Naive thymus-derived CD4-positive, alpha-beta T cell (primary cell): ENCODE measurements at regions of chr4 and their contacts with region 1.

Region 1: DNA sequence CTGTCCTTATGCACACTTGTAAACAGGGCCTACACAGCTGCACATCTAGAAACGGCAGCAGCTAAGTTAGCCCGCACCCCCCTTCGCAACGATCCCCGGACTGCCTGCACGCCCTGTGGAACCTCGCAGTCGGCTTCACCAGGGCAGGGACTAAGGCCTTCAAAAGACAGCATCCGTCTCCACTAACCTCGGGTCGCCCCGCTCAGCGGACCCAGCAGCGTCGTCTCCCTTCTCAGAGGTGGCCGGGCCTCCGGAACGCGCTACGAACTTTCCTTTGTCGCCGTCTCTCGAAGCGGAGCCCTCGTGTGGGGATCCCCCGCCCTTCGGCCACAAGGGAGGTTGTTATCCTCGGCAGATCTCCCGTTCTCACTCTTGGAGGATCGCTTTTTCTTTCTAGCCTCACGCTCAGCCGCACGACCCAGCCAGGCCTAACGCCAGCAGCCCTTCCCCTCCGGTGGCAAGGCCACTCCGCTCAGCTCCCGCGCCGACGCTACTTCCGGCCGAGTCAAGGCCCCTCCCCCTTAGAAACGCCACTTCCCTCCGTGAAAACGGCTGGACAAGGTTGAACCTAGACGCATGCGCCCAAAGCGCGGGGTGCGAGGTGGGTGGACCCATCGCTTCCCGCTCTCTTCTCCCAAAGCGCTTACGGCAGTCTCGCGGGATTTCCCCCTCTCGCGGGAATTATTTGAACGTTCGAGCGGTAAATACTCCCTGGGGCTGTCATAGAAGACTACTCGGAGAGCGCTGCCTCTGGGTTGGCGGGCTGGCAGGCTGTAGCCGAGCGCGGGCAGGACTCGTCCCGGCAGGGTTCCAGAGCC is at the starts of genes DCAF16 and NCAPG:
- DNase-seq: peak; percentile 97 to 99 (median 97)
- ATAC-seq: peak; percentile 95
- H3K4me3 ChIP-seq: peak within 1 kb of the TSS; percentile 96
- H3K4me3 Mint-ChIP-seq: peak within 1 kb of the TSS; percentile 93 to 100 (median 98)
- H3K27ac ChIP-seq: peak within 1 kb of the TSS; percentile 99
- H3K27ac Mint-ChIP-seq: peak within 1 kb of the TSS; percentile 91 to 99 (median 98)
- H3K4me1 ChIP-seq: peaks cover 16 to 30% of the 10 kb centered on the region in 2 donors
- H3K4me1 Mint-ChIP-seq: peaks cover 50 to 65% (median 59%) of the 10 kb centered on the region in 7 donors
- H3K27me3 ChIP-seq: no peaks in the 10 kb centered on the region
- H3K27me3 Mint-ChIP-seq: no peaks in the 10 kb centered on the region
- total RNA-seq, gene DCAF16: 50.3 to 85.1 (median 73.8) TPM
- total RNA-seq, gene NCAPG: 0.24 to 44.1 (median 0.35) TPM

Region 2: DNA sequence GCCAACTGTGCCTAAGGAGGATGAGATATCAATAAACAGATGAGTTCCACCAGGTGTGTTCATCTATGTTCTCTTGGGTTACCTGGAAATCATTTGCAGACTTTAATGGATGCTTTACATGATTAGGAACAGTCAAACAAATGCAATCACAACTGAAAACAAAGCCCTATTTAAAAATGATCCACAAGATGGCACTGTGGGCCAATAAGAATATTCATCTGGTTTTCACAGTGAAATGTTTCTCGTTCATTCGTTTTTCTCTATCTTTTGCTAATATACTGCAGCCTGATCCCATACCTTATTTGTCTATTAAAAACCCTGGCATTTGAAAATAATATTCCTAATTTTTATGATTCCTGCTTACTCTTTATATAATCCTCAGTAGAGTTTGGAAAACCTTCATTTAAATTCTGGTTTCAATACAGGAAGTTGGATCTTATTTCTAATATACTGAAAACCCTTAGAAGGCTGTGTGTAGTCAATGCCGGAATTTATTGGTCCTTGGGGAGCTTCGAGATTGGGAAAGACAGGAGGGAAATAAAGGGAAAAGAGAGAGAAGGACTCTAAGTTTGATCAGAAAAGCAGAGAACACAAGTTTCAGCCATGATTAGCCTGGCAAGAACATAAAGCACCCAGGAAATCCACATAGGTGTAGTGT is 1520.4 kb before region 1 on chr4:
- CTCF ChIA-PET with region 1: no interaction called
- POLR2A ChIA-PET with region 1: no interaction called
- intact Hi-C with region 1: loop called in 1 of 2 experiments (anchors 2 kb)
- DNase-seq: peak in 5 of 9 donors; percentile 8 to 21 (median 19)
- ATAC-seq: peak; percentile 45
- H3K4me3 ChIP-seq: no peak overlapping the region
- H3K4me3 Mint-ChIP-seq: peak overlapping the region in 7 of 10 donors; percentile 7 to 69 (median 12)
- H3K27ac ChIP-seq: no peak overlapping the region
- H3K27ac Mint-ChIP-seq: no peak overlapping the region
- H3K4me1 ChIP-seq: no peaks in the 10 kb centered on the region
- H3K4me1 Mint-ChIP-seq: peaks cover 0 to 5% (median 4%) of the 10 kb centered on the region in 7 donors
- H3K27me3 ChIP-seq: no peaks in the 10 kb centered on the region
- H3K27me3 Mint-ChIP-seq: peaks cover 5 to 37% (median 17%) of the 10 kb centered on the region in 5 donors

Region 3: DNA sequence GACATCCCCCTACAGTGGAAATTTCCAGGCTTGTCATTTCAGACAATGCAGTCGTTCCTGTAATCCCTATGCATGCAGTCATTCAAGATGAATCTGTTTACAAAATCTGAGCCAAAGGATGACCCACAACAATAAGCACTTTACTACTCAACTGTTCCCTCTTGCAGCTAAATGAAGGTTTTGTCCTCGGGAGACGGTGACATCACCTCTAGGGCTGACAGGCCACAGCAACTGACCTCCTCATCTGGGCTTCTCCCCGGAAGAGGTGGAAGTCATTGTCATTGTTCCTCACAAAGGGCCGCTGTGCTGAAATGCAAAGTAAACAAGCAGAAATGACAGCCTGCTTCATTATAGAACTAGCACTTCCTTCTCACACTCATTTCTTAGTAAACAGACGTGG is 266.3 kb before region 1 on chr4:
- CTCF ChIA-PET with region 1: interaction called, 11 read pairs
- POLR2A ChIA-PET with region 1: interaction called, 3 read pairs
- intact Hi-C with region 1: loop called (anchors 1 kb)
- DNase-seq: no peak
- ATAC-seq: peak; percentile 38
- H3K4me3 ChIP-seq: no peak overlapping the region
- H3K4me3 Mint-ChIP-seq: no peak overlapping the region
- H3K27ac ChIP-seq: no peak overlapping the region
- H3K27ac Mint-ChIP-seq: no peak overlapping the region
- H3K4me1 ChIP-seq: no peaks in the 10 kb centered on the region
- H3K4me1 Mint-ChIP-seq: peaks cover 0 to 6% (median 0%) of the 10 kb centered on the region in 7 donors
- H3K27me3 ChIP-seq: no peaks in the 10 kb centered on the region
- H3K27me3 Mint-ChIP-seq: peaks cover 0 to 22% (median 16%) of the 10 kb centered on the region in 5 donors

Region 4: GRCh38 chr4:17614416-17615299 is 195.8 kb before region 1 on chr4 and contains the start of gene MED28:
- CTCF ChIA-PET with region 1: interaction called, 3 read pairs
- POLR2A ChIA-PET with region 1: interaction called, 4 read pairs
- intact Hi-C with region 1: loop called (anchors 1 kb)
- DNase-seq: peak; percentile 91 to 96 (median 94)
- ATAC-seq: peak; percentile 97
- H3K4me3 ChIP-seq: peak within 1 kb of the TSS; percentile 100
- H3K4me3 Mint-ChIP-seq: peak within 1 kb of the TSS; percentile 86 to 100 (median 96)
- H3K27ac ChIP-seq: peak within 1 kb of the TSS; percentile 94
- H3K27ac Mint-ChIP-seq: peak within 1 kb of the TSS; percentile 92 to 99 (median 97)
- H3K4me1 ChIP-seq: peaks cover 19 to 31% of the 10 kb centered on the region in 2 donors
- H3K4me1 Mint-ChIP-seq: peaks cover 23 to 58% (median 45%) of the 10 kb centered on the region in 7 donors
- H3K27me3 ChIP-seq: no peaks in the 10 kb centered on the region
- H3K27me3 Mint-ChIP-seq: no peaks in the 10 kb centered on the region
- total RNA-seq, gene MED28: 50.1 to 82.1 (median 55.7) TPM

Region 5: DNA sequence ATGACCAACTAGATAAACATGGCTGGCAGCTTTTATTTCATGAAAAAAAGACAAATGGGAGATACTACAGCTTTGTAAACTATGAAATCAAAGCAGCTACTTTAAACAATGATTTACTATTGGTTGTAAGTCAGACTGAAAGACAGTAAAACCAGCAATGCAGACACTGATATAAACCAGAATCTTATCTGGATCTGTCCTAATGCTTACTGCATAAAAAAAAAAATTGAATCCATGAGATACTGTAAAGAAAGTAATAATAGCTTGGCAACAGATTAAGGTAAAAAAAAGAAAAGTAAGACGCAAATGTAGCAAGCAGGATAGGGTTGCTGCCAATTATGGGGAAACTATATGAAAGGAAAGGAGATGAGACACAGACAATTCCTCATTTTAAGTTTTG is 203.8 kb after region 1 on chr4:
- CTCF ChIA-PET with region 1: no interaction called
- POLR2A ChIA-PET with region 1: no interaction called
- intact Hi-C with region 1: no loop called
- DNase-seq: no peak
- ATAC-seq: no peak
- H3K4me3 ChIP-seq: no peak overlapping the region
- H3K4me3 Mint-ChIP-seq: no peak overlapping the region
- H3K27ac ChIP-seq: no peak overlapping the region
- H3K27ac Mint-ChIP-seq: no peak overlapping the region
- H3K4me1 ChIP-seq: peaks cover 0 to 3% of the 10 kb centered on the region in 2 donors
- H3K4me1 Mint-ChIP-seq: peaks cover 0 to 60% (median 54%) of the 10 kb centered on the region in 7 donors
- H3K27me3 ChIP-seq: no peaks in the 10 kb centered on the region
- H3K27me3 Mint-ChIP-seq: peaks cover 0 to 24% (median 0%) of the 10 kb centered on the region in 5 donors

Region 6: DNA sequence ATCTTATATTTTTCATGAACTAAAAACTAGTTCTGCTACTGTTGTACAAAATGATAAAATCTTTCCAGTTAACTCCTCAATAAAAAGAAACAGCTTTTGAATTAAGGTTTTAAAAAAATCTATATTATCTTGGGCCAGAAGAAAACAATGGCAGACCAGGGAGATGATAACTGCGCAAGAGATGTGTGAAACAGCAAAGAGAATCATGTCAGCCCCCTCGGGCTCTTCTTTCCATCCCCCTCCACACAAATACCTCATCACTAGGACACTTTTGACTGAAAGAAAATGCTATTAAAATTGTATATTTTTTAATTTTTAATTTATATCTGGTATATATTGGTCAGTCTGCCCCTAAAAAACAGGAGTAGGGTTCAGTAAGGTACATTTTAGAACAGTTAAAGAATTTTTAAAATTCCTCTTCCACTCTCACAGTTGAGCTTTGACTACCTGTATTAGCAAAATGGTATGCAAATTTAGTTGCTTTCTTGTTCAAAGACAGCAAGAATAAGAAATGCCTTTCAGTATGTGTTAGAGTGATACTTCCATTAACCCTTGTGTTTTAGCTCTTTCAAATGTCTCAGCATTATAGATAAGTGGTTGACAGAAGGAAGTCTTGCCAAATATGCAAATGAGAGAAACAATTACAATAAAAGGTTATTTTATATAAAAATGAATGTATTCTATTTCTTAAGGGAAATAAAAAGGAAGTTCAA is 247.5 kb after region 1 on chr4:
- CTCF ChIA-PET with region 1: no interaction called
- POLR2A ChIA-PET with region 1: no interaction called
- intact Hi-C with region 1: loop called in 1 of 2 experiments (anchors 2 kb)
- DNase-seq: no peak
- ATAC-seq: no peak
- H3K4me3 ChIP-seq: no peak overlapping the region
- H3K4me3 Mint-ChIP-seq: peak overlapping the region in 7 of 10 donors; percentile 4 to 56 (median 29)
- H3K27ac ChIP-seq: no peak overlapping the region
- H3K27ac Mint-ChIP-seq: peak overlapping the region in 1 of 9 donors; percentile 33
- H3K4me1 ChIP-seq: peaks cover 4 to 7% of the 10 kb centered on the region in 2 donors
- H3K4me1 Mint-ChIP-seq: peaks cover 8 to 27% (median 21%) of the 10 kb centered on the region in 7 donors
- H3K27me3 ChIP-seq: peaks cover 4 to 5% of the 10 kb centered on the region in 2 donors
- H3K27me3 Mint-ChIP-seq: peaks cover 39 to 61% (median 52%) of the 10 kb centered on the region in 5 donors

Region 7: GRCh38 chr4:18242919-18243693 is 432.6 kb after region 1 on chr4:
- CTCF ChIA-PET with region 1: no interaction called
- POLR2A ChIA-PET with region 1: no interaction called
- intact Hi-C with region 1: no loop called
- DNase-seq: no peak
- ATAC-seq: no peak
- H3K4me3 ChIP-seq: no peak overlapping the region
- H3K4me3 Mint-ChIP-seq: no peak overlapping the region
- H3K27ac ChIP-seq: no peak overlapping the region
- H3K27ac Mint-ChIP-seq: no peak overlapping the region
- H3K4me1 ChIP-seq: no peaks in the 10 kb centered on the region
- H3K4me1 Mint-ChIP-seq: no peaks in the 10 kb centered on the region
- H3K27me3 ChIP-seq: no peaks in the 10 kb centered on the region
- H3K27me3 Mint-ChIP-seq: peaks cover 0 to 24% (median 0%) of the 10 kb centered on the region in 5 donors